Esophagus squamous epithelium (tissue), 5 donors: ENCODE measurements at regions of chr15 and their contacts with region 1.

Region 1: GRCh38 chr15:23857028-23857641 is 170.0 kb upstream of the NDN start:
- DNase-seq: no peak
- H3K4me3 ChIP-seq: no peak overlapping the region
- H3K27ac ChIP-seq: no peak overlapping the region
- H3K4me1 ChIP-seq: no peaks in the 10 kb centered on the region
- H3K27me3 ChIP-seq: no peaks in the 10 kb centered on the region
- CTCF ChIP-seq: peak in 3 of 6 experiments; percentile 15 to 36 (median 22)
- POLR2A ChIP-seq: no peak

Region 2: GRCh38 chr15:23648920-23649515 is 208.1 kb before region 1 on chr15:
- intact Hi-C with region 1: loop called (anchors 5 kb)
- DNase-seq: no peak
- H3K4me3 ChIP-seq: no peak overlapping the region
- H3K27ac ChIP-seq: no peak overlapping the region
- H3K4me1 ChIP-seq: peaks cover 0 to 5% (median 0%) of the 10 kb centered on the region in 3 donors
- H3K27me3 ChIP-seq: peaks cover 0 to 41% (median 0%) of the 10 kb centered on the region in 4 donors
- CTCF ChIP-seq: peak in 5 of 6 experiments; percentile 24 to 46 (median 38)
- POLR2A ChIP-seq: no peak

Region 3: GRCh38 chr15:23954931-23955330 is 97.8 kb after region 1 on chr15:
- intact Hi-C with region 1: no loop called
- DNase-seq: no peak
- H3K4me3 ChIP-seq: no peak overlapping the region
- H3K27ac ChIP-seq: no peak overlapping the region
- H3K4me1 ChIP-seq: no peaks in the 10 kb centered on the region
- H3K27me3 ChIP-seq: no peaks in the 10 kb centered on the region
- CTCF ChIP-seq: no peak
- POLR2A ChIP-seq: no peak